ENCODE measurements at regions of chr5 and their contacts with region 1.

Region 1: DNA sequence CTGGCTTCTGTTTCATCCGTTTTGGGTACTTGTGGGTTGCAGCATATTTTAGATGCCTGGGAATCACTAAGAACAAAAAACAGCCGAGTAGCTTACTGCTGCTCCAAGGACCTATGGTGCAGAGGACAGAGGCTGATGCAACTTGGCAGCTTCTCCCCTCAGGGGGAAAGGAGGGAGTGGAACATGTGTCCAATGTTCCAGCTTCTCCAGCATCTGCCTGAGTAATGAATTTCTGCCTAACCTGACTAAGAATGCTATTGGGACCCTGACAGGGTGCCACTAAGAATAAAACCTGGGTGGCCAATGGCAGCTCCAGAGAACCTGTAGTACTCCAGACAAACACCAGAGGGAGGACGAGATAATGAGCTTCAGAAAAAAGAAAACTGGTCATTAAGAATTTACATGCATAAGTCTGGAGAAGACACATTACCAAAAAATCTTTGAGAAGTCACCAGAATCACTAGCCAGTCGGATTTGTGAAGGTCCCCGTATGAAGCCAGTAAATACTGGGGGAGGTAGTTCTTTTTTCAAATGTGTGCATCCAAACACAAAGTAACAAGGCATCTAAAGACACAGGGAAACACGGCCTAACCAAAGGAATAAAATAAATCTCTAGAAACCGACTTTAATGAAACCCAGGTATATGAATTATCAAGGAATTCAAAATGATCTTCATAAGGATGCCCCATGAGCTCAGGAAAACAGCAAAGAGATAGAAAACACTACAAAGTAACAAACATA is 293.5 kb downstream of the HINT1 start:
- DNase-seq: peak; percentile 67
- ATAC-seq: peak; percentile 93

Region 2: GRCh38 chr5:130773811-130774210 is 97.7 kb before region 1 on chr5:
- intact Hi-C with region 1: no loop called
- DNase-seq: no peak
- ATAC-seq: no peak

Region 3: DNA sequence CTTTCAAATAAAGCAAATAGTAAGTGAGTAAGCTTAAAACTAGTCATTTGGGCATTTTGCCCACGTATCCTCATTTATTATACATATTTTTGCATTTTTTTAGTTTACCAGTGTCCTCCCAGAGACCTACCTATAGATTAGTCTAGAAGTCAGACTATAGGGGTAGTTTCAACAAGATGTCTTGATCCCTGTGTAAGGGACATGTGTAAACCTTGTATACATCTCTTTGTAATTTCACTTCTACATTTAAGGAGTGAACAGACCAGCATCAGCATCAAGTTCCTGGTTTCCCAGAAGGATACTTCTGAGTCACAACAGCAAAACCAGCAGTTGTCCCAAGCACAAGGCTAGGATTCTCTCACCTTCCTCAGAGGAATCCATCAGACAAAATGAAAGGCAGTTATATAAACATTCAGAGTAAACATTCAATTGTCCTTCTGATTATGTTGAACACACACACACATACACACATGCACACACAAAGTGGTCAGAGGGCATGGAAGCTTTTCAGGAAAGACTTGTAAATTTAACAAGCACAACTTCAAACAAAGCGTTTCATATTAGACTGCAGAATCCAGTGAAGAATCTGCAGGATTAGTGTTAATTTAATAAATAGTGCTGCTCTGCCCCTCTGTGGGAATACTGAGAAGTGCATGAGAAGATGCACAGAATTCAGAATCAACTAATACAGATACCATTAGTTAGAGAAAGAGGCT is 238.2 kb after region 1 on chr5:
- intact Hi-C with region 1: loop called (anchors 5 kb)
- DNase-seq: no peak
- ATAC-seq: no peak

Measured in Right ventricle myocardium inferior (tissue), 1 donor.